GM12878 (cell line): ENCODE measurements at regions of chr6 and their contacts with region 1.

Region 1: DNA sequence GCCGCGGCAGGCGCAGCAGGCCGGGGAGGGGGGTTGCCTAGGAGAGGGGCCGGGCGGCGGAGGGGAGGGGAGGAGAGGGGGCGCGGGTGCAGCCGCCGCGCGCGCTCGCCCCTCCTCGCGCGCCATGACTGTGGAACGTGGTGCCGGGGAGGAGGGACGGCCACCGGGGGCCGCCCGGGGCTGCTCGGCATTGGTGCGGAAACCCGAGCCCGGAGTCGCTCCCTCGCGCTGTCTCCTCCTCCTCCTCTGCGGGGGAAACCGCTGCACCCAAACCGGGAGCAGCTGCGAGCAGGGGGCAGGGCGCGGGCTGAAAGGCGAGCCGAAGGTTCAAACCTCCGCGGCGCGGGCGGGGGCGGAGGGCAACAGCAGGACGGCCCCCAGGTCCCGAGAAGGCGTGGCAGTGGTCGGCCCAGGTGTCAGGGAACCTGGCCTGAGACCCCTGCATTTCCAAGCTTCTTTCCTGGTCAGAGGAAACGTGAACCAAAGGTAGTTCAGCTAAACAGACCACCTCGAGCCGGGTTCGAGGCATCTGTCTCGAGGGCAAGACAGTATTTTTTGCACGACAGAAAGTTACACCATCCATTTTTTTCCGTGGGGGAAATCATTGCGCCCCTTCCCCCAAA is 1.4 kb upstream of the TRERF1 start:
- DNase-seq: peak; percentile 51
- ATAC-seq: peak; percentile 88
- H3K4me3 ChIP-seq: peak overlapping the region; percentile 85
- H3K27ac ChIP-seq: peak overlapping the region; percentile 68
- H3K4me1 ChIP-seq: peaks cover 12% of the 10 kb centered on the region
- H3K27me3 ChIP-seq: no peaks in the 10 kb centered on the region
- CTCF ChIP-seq: no peak; a peak in 1 of 6 replicates
- EP300 ChIP-seq: 0 out of 4 replicates have a peak, but pooled peaks have one; percentile 2
- POLR2A ChIP-seq: peak; percentile 77
- RAD21 ChIP-seq: peak; percentile 20; the same call in 1 of the 2 replicates

Region 2: GRCh38 chr6:42260972-42261371 is 192.2 kb before region 1 on chr6:
- CTCF ChIA-PET with region 1: interaction called, 4 read pairs
- POLR2A ChIA-PET with region 1: interaction called, 4 read pairs
- RAD21 ChIA-PET with region 1: interaction called, 5 read pairs
- SMC1A ChIA-PET with region 1: interaction called, 10 read pairs
- in situ Hi-C with region 1: no loop called
- intact Hi-C with region 1: no loop called
- DNase-seq: no peak
- ATAC-seq: peak; percentile 91
- H3K4me3 ChIP-seq: no peak overlapping the region
- H3K27ac ChIP-seq: no peak overlapping the region
- H3K4me1 ChIP-seq: no peaks in the 10 kb centered on the region
- H3K27me3 ChIP-seq: no peaks in the 10 kb centered on the region
- CTCF ChIP-seq: peak in 2 of 3 experiments; percentile 47 to 55; a peak in 4 of 6 replicates
- EP300 ChIP-seq: no peak
- POLR2A ChIP-seq: no peak
- RAD21 ChIP-seq: peak; percentile 71

Region 3: DNA sequence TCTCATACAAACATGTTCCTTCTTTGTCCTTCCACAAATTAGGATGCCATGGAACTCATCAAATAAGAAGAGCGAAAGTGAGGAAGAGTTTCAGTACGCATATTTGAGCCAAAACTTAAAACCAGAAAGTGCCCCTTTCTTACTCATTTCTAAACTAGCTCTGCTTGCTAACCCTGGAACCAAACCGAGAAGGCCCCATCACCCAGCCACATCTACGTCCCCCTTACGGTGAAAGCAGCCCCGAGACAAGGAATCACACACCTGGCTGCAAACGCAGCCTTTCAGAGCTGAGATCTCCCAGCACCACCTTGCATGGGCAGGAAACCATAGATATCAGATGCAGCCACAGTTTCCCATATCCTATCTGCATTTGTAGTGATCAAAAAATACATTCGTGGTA is 29.9 kb before region 1 on chr6:
- CTCF ChIA-PET with region 1: interaction called, 3 read pairs
- POLR2A ChIA-PET with region 1: interaction called, 8 read pairs
- RAD21 ChIA-PET with region 1: interaction called, 18 read pairs
- SMC1A ChIA-PET with region 1: interaction called, 16 read pairs
- in situ Hi-C with region 1: no loop called
- intact Hi-C with region 1: no loop called
- DNase-seq: peak; percentile 61
- ATAC-seq: peak; percentile 78
- H3K4me3 ChIP-seq: no peak overlapping the region
- H3K27ac ChIP-seq: no peak overlapping the region
- H3K4me1 ChIP-seq: peaks cover 52% of the 10 kb centered on the region
- H3K27me3 ChIP-seq: no peaks in the 10 kb centered on the region
- CTCF ChIP-seq: no peak
- EP300 ChIP-seq: peak; percentile 31 to 34; a peak in 1 of 4 replicates
- POLR2A ChIP-seq: no peak
- RAD21 ChIP-seq: no peak

Region 4: GRCh38 chr6:42440778-42441696 is 12.1 kb before region 1 on chr6:
- CTCF ChIA-PET with region 1: interaction called, 7 read pairs
- POLR2A ChIA-PET with region 1: interaction called, 8 read pairs
- RAD21 ChIA-PET with region 1: interaction called, 12 read pairs
- SMC1A ChIA-PET with region 1: interaction called, 23 read pairs
- in situ Hi-C with region 1: no loop called
- intact Hi-C with region 1: no loop called
- DNase-seq: no peak
- ATAC-seq: no peak
- H3K4me3 ChIP-seq: 0 out of 2 replicates have a peak overlapping the region, but pooled peaks have one; percentile 9
- H3K27ac ChIP-seq: no peak overlapping the region
- H3K4me1 ChIP-seq: peaks cover 10% of the 10 kb centered on the region; the same call in 1 of the 2 replicates
- H3K27me3 ChIP-seq: no peaks in the 10 kb centered on the region
- CTCF ChIP-seq: no peak
- EP300 ChIP-seq: no peak
- POLR2A ChIP-seq: no peak
- RAD21 ChIP-seq: no peak

Region 5: DNA sequence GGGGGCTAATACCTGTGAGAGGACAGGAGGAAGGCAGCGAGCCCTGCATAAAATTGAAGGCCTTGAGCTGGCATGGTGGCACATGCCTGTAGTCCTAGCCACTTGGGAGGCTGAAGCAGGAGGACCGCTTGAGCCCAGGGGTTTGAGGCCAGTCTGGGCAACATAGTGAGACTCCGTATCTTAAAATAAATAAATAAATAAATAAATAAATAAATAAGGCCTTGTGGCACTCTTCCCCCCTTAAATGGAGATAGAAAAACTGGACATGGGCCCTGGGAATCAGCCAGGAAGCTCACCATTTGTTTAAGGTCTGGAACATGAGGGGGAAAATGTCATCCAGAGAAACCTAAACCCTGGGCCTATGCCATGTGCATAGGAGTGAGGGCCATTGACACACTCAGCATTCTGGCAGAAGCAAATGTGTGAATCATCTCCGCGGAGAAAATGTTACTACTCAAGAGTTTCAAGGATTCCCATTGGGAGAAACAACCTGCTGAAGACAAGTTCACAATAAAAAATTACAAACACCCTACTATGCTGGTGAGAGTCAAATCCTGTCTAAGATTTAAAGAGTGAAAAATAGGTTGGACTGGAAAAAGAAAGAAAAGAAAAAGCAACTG is 58.8 kb after region 1 on chr6:
- CTCF ChIA-PET with region 1: interaction called, 18 read pairs
- POLR2A ChIA-PET with region 1: interaction called, 24 read pairs
- RAD21 ChIA-PET with region 1: interaction called, 44 read pairs
- SMC1A ChIA-PET with region 1: interaction called, 29 read pairs
- in situ Hi-C with region 1: no loop called
- intact Hi-C with region 1: loop called (anchors 2 kb)
- DNase-seq: no peak
- ATAC-seq: no peak
- H3K4me3 ChIP-seq: no peak overlapping the region
- H3K27ac ChIP-seq: no peak overlapping the region
- H3K4me1 ChIP-seq: peaks cover 25% of the 10 kb centered on the region
- H3K27me3 ChIP-seq: no peaks in the 10 kb centered on the region
- CTCF ChIP-seq: no peak
- EP300 ChIP-seq: no peak
- POLR2A ChIP-seq: no peak
- RAD21 ChIP-seq: no peak